Motor neuron (in vitro differentiated cells): ENCODE measurements at regions of chr2 and their contacts with region 1.

Region 1: GRCh38 chr2:146540271-146540932 is 1304.4 kb upstream of the ACVR2A start:
- ATAC-seq: peak in 7 of 8 experiments; percentile 31 to 82 (median 59)
- H3K4me3 ChIP-seq: no peak overlapping the region
- H3K27ac ChIP-seq: peak overlapping the region in 1 of 2 donors; percentile 62
- H3K4me1 ChIP-seq: peaks cover 7 to 21% of the 10 kb centered on the region in 2 donors

Region 2: DNA sequence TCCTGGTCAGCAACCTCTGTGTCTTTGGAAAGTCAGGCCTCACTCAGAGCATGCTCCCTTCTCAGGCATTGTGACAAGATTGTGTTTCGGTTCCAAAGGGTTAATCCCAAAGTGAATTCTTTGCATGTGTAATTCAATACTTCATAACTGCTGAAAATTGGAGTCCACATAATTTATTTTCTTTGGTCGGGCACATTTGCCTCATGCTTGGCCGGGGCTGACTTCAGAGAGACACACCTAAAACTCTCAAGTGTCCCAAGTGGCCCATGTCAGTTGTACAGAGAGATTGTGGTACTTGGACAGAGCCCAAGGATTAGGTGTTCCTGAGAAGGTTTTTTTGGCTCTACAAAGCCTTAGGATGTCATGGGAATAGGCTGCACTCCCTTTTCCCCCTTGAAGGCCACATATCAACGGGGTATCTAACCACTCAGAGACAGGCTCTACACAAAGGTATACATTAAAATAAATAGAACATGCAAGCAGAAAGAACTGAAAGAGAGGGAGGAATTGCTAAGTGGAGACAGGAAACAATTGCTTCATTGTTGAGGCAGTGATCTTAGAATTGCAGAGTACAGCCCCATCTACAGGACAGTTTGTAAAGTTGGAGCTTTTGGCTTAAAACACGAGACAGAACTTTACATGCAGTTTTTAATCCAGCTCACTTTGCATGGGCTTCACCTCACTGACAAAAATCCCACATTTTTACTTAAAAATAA is 788.2 kb before region 1 on chr2:
- in situ Hi-C with region 1: loop called in 1 of 9 experiments (anchors 25 kb)
- ATAC-seq: peak; percentile 67 to 86 (median 79)
- H3K4me3 ChIP-seq: no peak overlapping the region
- H3K27ac ChIP-seq: no peak overlapping the region
- H3K4me1 ChIP-seq: peaks cover 4 to 7% of the 10 kb centered on the region in 2 donors

Region 3: GRCh38 chr2:146661473-146662096 is 121.2 kb after region 1 on chr2:
- in situ Hi-C with region 1: loop called in 1 of 9 experiments (anchors 25 kb)
- ATAC-seq: peak in 2 of 8 experiments; percentile 17 to 21
- H3K4me3 ChIP-seq: no peak overlapping the region
- H3K27ac ChIP-seq: no peak overlapping the region
- H3K4me1 ChIP-seq: no peaks in the 10 kb centered on the region

Region 4: DNA sequence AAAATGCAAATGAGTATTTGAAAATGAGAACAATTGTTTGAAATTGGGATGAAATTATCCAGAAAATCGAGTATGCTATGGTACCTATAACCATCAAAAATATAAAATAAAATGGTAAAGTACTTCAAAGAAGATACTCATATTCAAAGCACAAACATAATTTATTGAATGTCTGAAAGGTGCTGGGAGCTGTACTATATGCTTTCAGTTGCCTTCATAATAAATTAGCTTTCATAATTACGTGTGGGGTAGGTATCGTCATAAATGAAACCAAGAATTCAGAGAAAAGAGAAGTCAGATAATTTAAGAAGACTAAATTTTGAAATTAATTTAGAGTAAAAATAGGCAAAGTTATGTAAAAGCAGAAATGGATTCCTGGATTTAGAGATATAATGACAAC is 582.5 kb after region 1 on chr2:
- in situ Hi-C with region 1: no loop called
- ATAC-seq: no peak
- H3K4me3 ChIP-seq: no peak overlapping the region
- H3K27ac ChIP-seq: no peak overlapping the region
- H3K4me1 ChIP-seq: no peaks in the 10 kb centered on the region